ENCODE measurements at regions of chr11 and their contacts with region 1.

Region 1: DNA sequence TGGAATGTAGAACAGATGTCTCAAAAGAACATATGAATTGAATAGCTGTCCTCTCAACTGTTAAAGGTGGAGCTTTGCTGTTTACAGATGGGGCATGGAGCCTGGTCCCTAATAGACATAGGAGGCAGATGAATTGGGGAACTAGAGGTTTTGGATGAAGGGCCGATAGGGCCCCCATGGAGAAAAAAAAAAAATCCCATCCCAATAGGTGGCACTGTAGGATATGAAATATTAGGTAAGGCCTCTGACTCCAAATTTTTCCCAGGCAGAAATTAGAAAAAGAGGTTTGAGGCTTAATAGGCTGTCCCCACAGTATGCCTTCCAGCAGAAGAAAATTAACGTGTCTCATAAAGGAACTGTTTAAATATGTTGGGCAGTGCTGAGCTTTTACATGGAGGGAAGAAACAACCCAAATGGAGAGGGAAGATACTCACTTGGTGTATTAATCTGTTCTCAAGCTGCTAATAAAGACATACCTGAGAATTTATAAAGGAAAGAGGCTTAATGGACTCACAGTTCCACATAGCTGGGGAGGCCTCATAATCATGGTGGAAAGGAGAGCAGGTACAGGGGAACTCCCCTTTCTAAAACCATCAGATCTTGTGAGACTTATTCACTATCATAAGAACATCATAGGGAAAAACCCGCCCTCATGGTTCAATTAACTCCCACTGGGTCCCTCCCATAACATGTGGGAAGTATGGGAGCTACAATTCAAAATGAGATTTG is 30.1 kb upstream of the TMEM45B start:
- DNase-seq: no peak
- H3K4me3 Mint-ChIP-seq: no peak overlapping the region
- H3K27ac Mint-ChIP-seq: no peak overlapping the region
- H3K4me1 Mint-ChIP-seq: peaks cover 14% of the 10 kb centered on the region
- H3K27me3 Mint-ChIP-seq: no peaks in the 10 kb centered on the region

Region 2: GRCh38 chr11:129853518-129854236 is 68.1 kb after region 1 on chr11:
- CTCF ChIA-PET with region 1: interaction called, 3 read pairs
- POLR2A ChIA-PET with region 1: no interaction called
- intact Hi-C with region 1: loop called (anchors 5 kb)
- DNase-seq: peak; percentile 82
- H3K4me3 Mint-ChIP-seq: peak overlapping the region; percentile 10
- H3K27ac Mint-ChIP-seq: peak overlapping the region; percentile 86
- H3K4me1 Mint-ChIP-seq: peaks cover 39% of the 10 kb centered on the region
- H3K27me3 Mint-ChIP-seq: no peaks in the 10 kb centered on the region